ENCODE measurements at regions of chrX and their contacts with region 1.

Region 1: GRCh38 chrX:30570505-30570904 is 7.1 kb downstream of the TASL start:
- DNase-seq: peak; percentile 5
- H3K4me3 ChIP-seq: no peak overlapping the region
- H3K27ac ChIP-seq: no peak overlapping the region
- H3K4me1 ChIP-seq: no peaks in the 10 kb centered on the region
- H3K27me3 ChIP-seq: no peaks in the 10 kb centered on the region
- CTCF ChIP-seq: peak; percentile 14 to 17
- POLR2A ChIP-seq: no peak

Region 2: GRCh38 chrX:30010471-30010870 is 560.0 kb before region 1 on chrX:
- CTCF ChIA-PET with region 1: no interaction called
- POLR2A ChIA-PET with region 1: no interaction called
- dilution Hi-C with region 1: no loop called
- intact Hi-C with region 1: no loop called
- DNase-seq: no peak
- H3K4me3 ChIP-seq: no peak overlapping the region
- H3K27ac ChIP-seq: no peak overlapping the region
- H3K4me1 ChIP-seq: no peaks in the 10 kb centered on the region
- H3K27me3 ChIP-seq: no peaks in the 10 kb centered on the region
- CTCF ChIP-seq: no peak
- POLR2A ChIP-seq: no peak

Region 3: GRCh38 chrX:30713061-30713525 is 142.6 kb after region 1 on chrX:
- CTCF ChIA-PET with region 1: interaction called, 30 read pairs
- POLR2A ChIA-PET with region 1: no interaction called
- dilution Hi-C with region 1: no loop called
- intact Hi-C with region 1: loop called (anchors 1 kb)
- DNase-seq: peak; percentile 45
- H3K4me3 ChIP-seq: no peak overlapping the region
- H3K27ac ChIP-seq: no peak overlapping the region
- H3K4me1 ChIP-seq: no peaks in the 10 kb centered on the region
- H3K27me3 ChIP-seq: no peaks in the 10 kb centered on the region
- CTCF ChIP-seq: peak; percentile 40 to 56
- POLR2A ChIP-seq: no peak

Measured in endothelial cell of umbilical vein (primary cell).